PC-9 (cell line): ENCODE measurements at regions of chr12 and their contacts with region 1.

Region 1: GRCh38 chr12:13179211-13180074 is 17.1 kb upstream of the EMP1 start:
- DNase-seq: peak; percentile 94 to 95
- H3K4me3 ChIP-seq: peak overlapping the region; percentile 39; the same call in 1 of the 2 replicates
- H3K27ac ChIP-seq: peak overlapping the region; percentile 95
- H3K4me1 ChIP-seq: peaks cover 89% of the 10 kb centered on the region
- H3K27me3 ChIP-seq: no peaks in the 10 kb centered on the region
- CTCF ChIP-seq: no peak

Region 2: GRCh38 chr12:13228579-13228978 is 49.1 kb after region 1 on chr12:
- CTCF ChIA-PET with region 1: no interaction called
- POLR2A ChIA-PET with region 1: interaction called, 18 read pairs
- intact Hi-C with region 1: no loop called
- DNase-seq: no peak
- H3K4me3 ChIP-seq: no peak overlapping the region
- H3K27ac ChIP-seq: no peak overlapping the region
- H3K4me1 ChIP-seq: peaks cover 18% of the 10 kb centered on the region
- H3K27me3 ChIP-seq: no peaks in the 10 kb centered on the region
- CTCF ChIP-seq: no peak

Region 3: DNA sequence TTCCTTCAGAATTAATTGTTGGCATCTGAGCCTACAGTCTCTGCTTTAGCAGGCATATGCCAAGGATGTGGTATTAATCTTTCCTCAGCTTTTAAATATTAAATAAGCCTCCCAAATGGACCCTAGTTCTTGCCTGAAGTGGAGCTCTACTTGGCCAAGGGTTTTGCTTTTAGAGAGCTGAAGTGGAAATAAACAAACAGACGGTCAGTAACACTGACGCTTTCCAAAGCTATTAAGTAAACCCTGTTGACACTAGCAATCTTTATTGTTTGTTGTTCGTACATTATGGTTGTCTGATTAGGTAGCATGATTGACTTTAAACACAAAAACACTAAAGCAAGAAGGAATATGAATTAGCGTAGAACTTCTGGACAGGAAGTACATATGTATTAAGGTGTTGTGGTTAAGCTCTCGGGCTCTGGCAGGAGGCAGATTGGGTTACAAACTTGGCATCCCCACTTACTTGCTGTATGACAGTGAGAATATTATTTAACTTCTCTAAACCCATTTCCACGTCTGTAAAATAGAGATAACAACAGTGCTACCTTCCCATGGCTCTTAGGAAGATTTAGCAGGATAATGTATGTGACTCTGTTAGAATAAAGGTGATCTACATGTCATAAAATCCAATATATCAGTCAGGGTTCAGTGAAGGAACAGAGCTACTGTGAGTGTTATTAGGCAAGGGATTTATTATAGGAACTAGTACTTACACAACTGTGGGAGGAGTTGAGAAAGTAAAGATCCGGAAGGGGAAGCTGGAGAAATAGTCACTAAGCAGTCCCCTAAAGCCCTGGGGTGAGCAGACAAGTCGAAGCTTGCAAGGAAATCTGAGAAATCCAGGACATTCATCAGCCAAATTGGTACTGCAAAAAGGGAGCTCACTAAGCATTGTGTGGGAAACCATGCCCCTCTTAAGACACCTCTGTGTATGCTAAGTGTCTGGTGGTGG is 1093.8 kb after region 1 on chr12:
- CTCF ChIA-PET with region 1: no interaction called
- POLR2A ChIA-PET with region 1: no interaction called
- intact Hi-C with region 1: no loop called
- DNase-seq: no peak
- H3K4me3 ChIP-seq: no peak overlapping the region
- H3K27ac ChIP-seq: no peak overlapping the region
- H3K4me1 ChIP-seq: no peaks in the 10 kb centered on the region
- H3K27me3 ChIP-seq: no peaks in the 10 kb centered on the region
- CTCF ChIP-seq: no peak